MCF 10A (cell line): ENCODE measurements at regions of chr6 and their contacts with region 1.

Region 1: GRCh38 chr6:99425647-99426453 is 742 bp upstream of the PNISR start:
- DNase-seq: peak; percentile 94
- H3K4me3 Mint-ChIP-seq: peak overlapping the region; percentile 88
- H3K27ac Mint-ChIP-seq: peak overlapping the region; percentile 99
- H3K4me1 Mint-ChIP-seq: peaks cover 35% of the 10 kb centered on the region
- H3K27me3 Mint-ChIP-seq: no peaks in the 10 kb centered on the region
- CTCF ChIP-seq: peak; percentile 38

Region 2: DNA sequence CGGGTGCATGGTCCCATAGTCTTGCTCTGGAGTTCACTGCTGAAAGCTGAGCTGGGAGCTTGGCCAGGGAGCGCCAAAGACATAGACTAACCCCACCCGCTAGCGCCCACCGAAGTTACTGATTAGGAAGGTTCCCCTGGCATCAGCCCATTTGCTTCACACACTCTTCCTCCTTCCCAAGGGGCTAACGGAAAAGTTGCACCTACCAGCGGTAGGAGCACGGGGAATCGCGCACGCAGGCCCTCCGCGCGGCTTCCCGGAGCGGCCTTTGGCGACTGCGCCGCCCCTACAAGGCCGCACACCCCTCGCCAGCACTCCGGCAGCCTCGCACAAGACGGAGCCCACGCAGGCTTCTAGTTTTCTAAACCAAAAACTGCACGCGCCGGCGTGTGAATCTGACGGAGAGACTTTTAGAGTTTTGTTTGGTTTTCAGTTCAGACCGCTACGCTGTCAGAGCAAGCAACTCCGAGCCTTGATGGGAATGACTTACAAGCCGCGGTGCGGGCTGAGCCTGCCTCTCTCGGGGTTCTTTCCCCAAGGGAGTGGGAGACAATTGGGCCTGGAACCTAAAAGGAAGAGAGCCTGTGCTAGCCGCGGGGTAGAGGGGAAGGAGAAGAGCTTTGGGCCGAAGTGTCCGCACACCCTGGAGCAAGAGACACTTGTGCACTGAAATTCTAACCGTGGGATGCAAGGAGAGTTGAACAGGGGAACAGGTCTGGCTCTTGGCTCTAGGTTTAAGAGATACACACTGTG is 592.4 kb before region 1 on chr6:
- CTCF ChIA-PET with region 1: no interaction called
- POLR2A ChIA-PET with region 1: no interaction called
- intact Hi-C with region 1: no loop called
- DNase-seq: peak; percentile 14
- H3K4me3 Mint-ChIP-seq: peak overlapping the region; percentile 86
- H3K27ac Mint-ChIP-seq: no peak overlapping the region
- H3K4me1 Mint-ChIP-seq: peaks cover 18% of the 10 kb centered on the region
- H3K27me3 Mint-ChIP-seq: peaks cover 100% of the 10 kb centered on the region
- CTCF ChIP-seq: no peak

Region 3: GRCh38 chr6:98947351-98948292 is 478.2 kb before region 1 on chr6 and contains the start of gene FBXL4:
- CTCF ChIA-PET with region 1: no interaction called
- POLR2A ChIA-PET with region 1: no interaction called
- intact Hi-C with region 1: loop called (anchors 10 kb)
- DNase-seq: peak; percentile 91
- H3K4me3 Mint-ChIP-seq: peak within 1 kb of the TSS; percentile 88
- H3K27ac Mint-ChIP-seq: peak within 1 kb of the TSS; percentile 95
- H3K4me1 Mint-ChIP-seq: peaks cover 21% of the 10 kb centered on the region
- H3K27me3 Mint-ChIP-seq: peaks cover 6% of the 10 kb centered on the region
- CTCF ChIP-seq: no peak
- total RNA-seq, gene FBXL4: 11.3 and 15.7 TPM in 2 replicates

Region 4: GRCh38 chr6:99349171-99350141 is 76.4 kb before region 1 on chr6 and contains the start of gene FAXC:
- CTCF ChIA-PET with region 1: interaction called, 10 read pairs
- POLR2A ChIA-PET with region 1: interaction called, 7 read pairs
- intact Hi-C with region 1: no loop called
- DNase-seq: peak; percentile 73
- H3K4me3 Mint-ChIP-seq: peak within 1 kb of the TSS; percentile 63
- H3K27ac Mint-ChIP-seq: no peak within 1 kb of the TSS
- H3K4me1 Mint-ChIP-seq: peaks cover 1% of the 10 kb centered on the region
- H3K27me3 Mint-ChIP-seq: peaks cover 13% of the 10 kb centered on the region
- CTCF ChIP-seq: no peak
- total RNA-seq, gene FAXC: 2.3 and 3.6 TPM in 2 replicates

Region 5: GRCh38 chr6:99393698-99394531 is 31.9 kb before region 1 on chr6 and contains the start of gene COQ3:
- CTCF ChIA-PET with region 1: interaction called, 8 read pairs
- POLR2A ChIA-PET with region 1: interaction called, 48 read pairs
- intact Hi-C with region 1: loop called (anchors 2 kb)
- DNase-seq: peak; percentile 76
- H3K4me3 Mint-ChIP-seq: peak within 1 kb of the TSS; percentile 93
- H3K27ac Mint-ChIP-seq: peak within 1 kb of the TSS; percentile 96
- H3K4me1 Mint-ChIP-seq: peaks cover 6% of the 10 kb centered on the region
- H3K27me3 Mint-ChIP-seq: no peaks in the 10 kb centered on the region
- CTCF ChIP-seq: no peak
- total RNA-seq, gene COQ3: 4.8 and 7.7 TPM in 2 replicates

Region 6: GRCh38 chr6:99520855-99521632 is 95.2 kb after region 1 on chr6:
- CTCF ChIA-PET with region 1: interaction called, 3 read pairs
- POLR2A ChIA-PET with region 1: interaction called, 10 read pairs
- intact Hi-C with region 1: no loop called
- DNase-seq: peak; percentile 86
- H3K4me3 Mint-ChIP-seq: peak overlapping the region; percentile 96
- H3K27ac Mint-ChIP-seq: peak overlapping the region; percentile 94
- H3K4me1 Mint-ChIP-seq: peaks cover 19% of the 10 kb centered on the region
- H3K27me3 Mint-ChIP-seq: no peaks in the 10 kb centered on the region
- CTCF ChIP-seq: peak; percentile 44

Region 7: GRCh38 chr6:99568103-99568933 is 142.5 kb after region 1 on chr6 and contains the start of gene CCNC:
- CTCF ChIA-PET with region 1: no interaction called
- POLR2A ChIA-PET with region 1: interaction called, 34 read pairs
- intact Hi-C with region 1: no loop called
- DNase-seq: peak; percentile 97
- H3K4me3 Mint-ChIP-seq: peak within 1 kb of the TSS; percentile 100
- H3K27ac Mint-ChIP-seq: peak within 1 kb of the TSS; percentile 100
- H3K4me1 Mint-ChIP-seq: peaks cover 23% of the 10 kb centered on the region
- H3K27me3 Mint-ChIP-seq: no peaks in the 10 kb centered on the region
- CTCF ChIP-seq: no peak
- total RNA-seq, gene CCNC: 54.0 and 76.5 TPM in 2 replicates